ENCODE measurements at regions of chr13 and their contacts with region 1.

Region 1: GRCh38 chr13:33542283-33543088 is 256.9 kb upstream of the STARD13 start:
- DNase-seq: peak; percentile 99
- ATAC-seq: peak; percentile 93 to 96

Region 2: GRCh38 chr13:33228648-33229445 is 313.6 kb before region 1 on chr13:
- intact Hi-C with region 1: loop called in 1 of 2 experiments (anchors 10 kb)
- DNase-seq: no peak
- ATAC-seq: peak; percentile 39 to 68

Region 3: DNA sequence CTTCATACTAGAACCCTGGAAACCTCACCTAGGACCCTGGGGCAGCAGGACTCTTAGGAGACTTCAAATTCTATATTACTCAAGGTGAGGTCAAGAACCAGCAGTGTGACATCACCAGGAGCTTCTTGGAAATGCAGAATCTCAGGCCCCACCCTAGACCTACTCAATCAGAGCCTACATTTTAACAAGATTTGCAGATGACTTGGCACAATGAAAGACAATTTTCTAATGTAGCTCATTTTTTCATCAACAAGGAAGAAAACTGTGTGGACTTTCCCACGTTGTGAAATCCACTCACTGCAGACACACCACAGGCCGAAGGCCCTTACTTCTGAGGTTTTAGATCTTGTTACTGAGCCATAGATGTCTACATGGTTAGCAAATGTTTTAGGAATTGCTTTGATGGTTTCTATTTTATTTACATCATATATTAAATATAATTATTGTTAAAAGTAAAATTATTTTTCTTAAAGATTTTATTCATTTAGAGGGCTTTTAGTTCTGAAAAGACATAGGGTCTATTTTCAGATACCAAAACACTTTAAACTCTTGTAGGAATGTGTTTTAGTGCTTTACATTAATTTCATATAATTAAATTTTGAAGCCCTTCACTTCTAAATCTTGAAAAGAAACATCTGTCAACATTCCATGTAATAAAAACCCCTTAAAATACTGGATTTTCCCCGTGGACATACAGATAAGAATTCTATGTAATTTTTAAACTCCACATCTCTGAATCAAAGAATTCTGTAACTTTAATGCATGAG is 238.5 kb before region 1 on chr13:
- intact Hi-C with region 1: no loop called
- DNase-seq: no peak
- ATAC-seq: no peak

Region 4: DNA sequence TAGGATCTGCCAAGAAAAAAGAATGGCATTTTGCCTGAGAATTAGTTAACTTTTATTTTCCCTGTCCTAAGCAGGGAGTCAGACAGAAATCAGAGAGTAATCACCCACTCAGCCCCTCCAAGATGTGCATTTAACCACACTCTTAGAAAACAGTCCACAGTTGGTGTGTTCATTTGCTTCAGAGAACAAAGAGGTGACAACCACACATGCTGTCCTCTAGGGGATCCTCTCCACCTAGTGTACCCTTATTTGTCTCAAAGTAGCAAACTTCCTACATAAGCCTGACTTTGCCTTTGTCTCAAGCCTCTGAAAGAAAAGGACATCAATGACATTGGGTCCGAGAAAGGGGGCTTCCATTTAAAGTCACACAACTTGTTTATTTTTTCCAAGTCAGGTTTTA is 168.4 kb after region 1 on chr13:
- intact Hi-C with region 1: no loop called
- DNase-seq: no peak
- ATAC-seq: no peak